Activated CD8-positive, alpha-beta T cell treated with anti-CD3 and anti-CD28 coated beads, Interleukin-2, amount 10 ng/mL, durations not matched to agents 7 days and 5 days (primary cell): ENCODE measurements at regions of chr14 and their contacts with region 1.

Region 1: GRCh38 chr14:57268161-57269069 is at the starts of genes AP5M1 and EXOC5:
- DNase-seq: peak; percentile 95
- ATAC-seq: peak; percentile 88
- H3K4me3 Mint-ChIP-seq: peak within 1 kb of the TSS; percentile 100
- H3K27ac Mint-ChIP-seq: peak within 1 kb of the TSS; percentile 100
- H3K4me1 Mint-ChIP-seq: peaks cover 43% of the 10 kb centered on the region
- H3K27me3 Mint-ChIP-seq: no peaks in the 10 kb centered on the region
- total RNA-seq, gene AP5M1: 45.2 to 46.3 TPM
- total RNA-seq, gene EXOC5: 69.2 to 69.6 TPM

Region 2: DNA sequence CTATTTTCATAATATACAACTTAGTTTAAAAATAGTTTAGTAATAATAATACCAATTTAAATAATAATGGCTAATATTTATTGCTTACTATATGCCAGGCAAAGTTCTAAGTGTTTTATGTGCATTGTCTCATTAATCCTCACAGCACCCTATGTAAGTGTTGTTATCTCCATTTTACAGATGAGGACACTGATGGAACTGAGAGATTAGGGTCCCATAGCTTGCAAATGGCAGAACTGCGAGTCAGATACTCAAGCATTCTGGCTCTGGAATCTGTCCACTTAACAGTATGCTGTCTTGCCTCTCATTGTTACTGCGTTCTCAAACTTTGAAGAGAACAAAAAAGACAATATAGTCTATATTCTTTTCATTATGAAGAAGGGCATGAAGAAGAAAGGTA is 19.3 kb after region 1 on chr14:
- CTCF ChIA-PET with region 1: interaction called, 4 read pairs
- POLR2A ChIA-PET with region 1: interaction called, 12 read pairs
- DNase-seq: no peak
- ATAC-seq: no peak
- H3K4me3 Mint-ChIP-seq: no peak overlapping the region
- H3K27ac Mint-ChIP-seq: no peak overlapping the region
- H3K4me1 Mint-ChIP-seq: no peaks in the 10 kb centered on the region
- H3K27me3 Mint-ChIP-seq: no peaks in the 10 kb centered on the region

Region 3: DNA sequence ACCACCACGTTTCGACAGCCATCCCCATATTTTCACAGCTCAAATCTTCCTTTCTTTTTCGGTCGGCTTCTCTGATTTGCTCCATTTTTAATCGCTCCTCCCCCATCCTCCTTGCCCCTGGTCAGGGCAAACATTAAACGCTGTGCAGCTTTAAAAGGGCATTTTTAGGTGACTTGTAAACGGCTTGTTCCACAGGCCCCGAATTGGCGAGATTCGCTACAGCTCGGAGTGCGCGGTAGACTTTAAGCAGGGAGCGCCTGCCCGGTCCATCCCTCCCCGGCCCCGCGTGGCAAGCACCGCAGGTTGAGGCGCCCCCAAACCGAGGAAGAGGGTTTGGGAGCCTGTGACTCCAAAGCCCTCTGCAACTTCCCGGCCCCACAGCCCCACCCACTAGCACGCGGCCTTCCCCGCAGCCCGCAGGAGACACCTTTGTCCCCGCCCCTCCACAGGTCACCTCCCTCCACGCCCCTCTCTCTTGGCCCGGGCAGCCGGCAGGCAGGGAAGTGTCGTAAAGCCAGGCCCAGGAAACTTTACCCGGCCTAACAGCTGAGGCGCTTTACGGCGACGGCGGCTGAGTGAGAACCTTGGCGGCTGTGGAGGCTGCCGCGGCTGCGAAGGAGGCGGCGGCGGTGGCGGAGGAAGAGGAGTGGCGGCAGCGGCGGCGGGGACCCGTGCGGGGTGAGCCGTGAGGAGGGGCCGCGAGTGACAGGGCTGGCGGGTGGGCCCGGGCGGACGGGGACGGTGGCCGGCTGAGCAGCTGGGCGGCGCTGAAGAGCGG is 121.8 kb after region 1 on chr14 and contains the start of gene NAA30:
- CTCF ChIA-PET with region 1: interaction called, 4 read pairs
- POLR2A ChIA-PET with region 1: interaction called, 22 read pairs
- DNase-seq: peak; percentile 97
- ATAC-seq: peak; percentile 89
- H3K4me3 Mint-ChIP-seq: peak within 1 kb of the TSS; percentile 78
- H3K27ac Mint-ChIP-seq: peak within 1 kb of the TSS; percentile 86
- H3K4me1 Mint-ChIP-seq: peaks cover 46% of the 10 kb centered on the region
- H3K27me3 Mint-ChIP-seq: peaks cover 3% of the 10 kb centered on the region
- total RNA-seq, gene NAA30: 12.7 to 16.0 TPM